Dorsolateral prefrontal cortex (tissue), 120 donors: ENCODE measurements at regions of chr20 and their contacts with region 1.

Region 1: DNA sequence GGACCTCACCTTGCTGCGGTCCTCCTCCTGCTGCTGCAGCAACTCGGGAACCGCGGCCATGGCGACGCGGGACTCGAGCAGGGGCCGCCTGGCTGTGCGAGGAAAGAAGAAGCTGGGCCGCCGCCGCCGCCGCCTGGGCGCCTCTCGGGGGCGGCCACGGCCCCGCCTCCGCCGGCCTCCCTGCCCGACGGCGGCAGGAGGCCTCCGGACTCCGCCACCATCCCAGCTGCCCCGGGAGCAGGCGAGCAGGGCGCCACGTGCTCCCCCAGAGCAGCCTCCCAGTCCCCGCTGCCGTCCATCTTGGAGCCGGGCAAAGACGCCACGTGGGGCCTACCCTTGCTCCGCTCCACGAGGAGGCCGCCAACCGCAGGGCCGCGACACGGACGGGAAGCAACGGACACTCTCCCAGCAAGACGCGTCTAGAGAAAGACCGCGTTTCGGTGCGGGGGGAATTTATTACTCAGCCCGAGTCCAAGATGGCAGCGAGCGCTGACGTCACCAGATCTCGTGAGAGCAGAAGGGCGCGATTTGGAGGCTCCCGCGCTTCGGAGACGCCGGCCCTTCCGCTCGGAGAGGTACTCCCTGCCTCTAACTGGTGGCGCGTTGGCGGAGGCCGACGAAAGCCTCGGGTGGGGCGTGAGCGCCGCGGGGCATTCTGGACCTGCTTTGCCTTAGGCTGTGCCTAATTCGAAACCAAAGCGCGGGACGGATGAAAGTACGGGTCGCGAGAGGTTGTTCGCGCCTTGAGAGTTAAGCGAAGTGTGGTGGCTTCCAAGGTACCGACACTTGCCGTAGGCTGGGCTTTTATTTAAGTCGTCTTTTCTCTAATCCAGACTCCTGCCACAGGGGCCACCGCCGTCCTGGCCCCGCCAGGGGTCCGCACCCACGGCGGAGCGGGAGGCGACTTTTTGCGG is at the starts of genes MGME1 and SNX5:
- DNase-seq: peak; percentile 98 to 99 (median 99)
- H3K4me3 ChIP-seq: peak within 1 kb of the TSS; percentile 64 to 99 (median 93)
- H3K27ac ChIP-seq: peak within 1 kb of the TSS; percentile 88 to 100 (median 99)
- H3K27me3 ChIP-seq: no peaks in the 10 kb centered on the region
- CTCF ChIP-seq: peak in 30 of 56 donors; percentile 5 to 53 (median 21)
- total RNA-seq, gene MGME1: 3.2 to 12.5 (median 6.9) TPM
- total RNA-seq, gene SNX5: 48.0 to 94.6 (median 62.3) TPM

Region 2: GRCh38 chr20:17530716-17531664 is 437.6 kb before region 1 on chr20 and contains the start of gene BFSP1:
- intact Hi-C with region 1: loop called in 1 of 2 experiments (anchors 2 kb)
- DNase-seq: peak in 8 of 10 donors; percentile 26 to 73 (median 52)
- H3K4me3 ChIP-seq: peak within 1 kb of the TSS; percentile 34 to 76 (median 63)
- H3K27ac ChIP-seq: peak within 1 kb of the TSS in 46 of 59 donors; percentile 1 to 86 (median 68)
- H3K27me3 ChIP-seq: no peaks in the 10 kb centered on the region
- CTCF ChIP-seq: peak in 11 of 56 donors; percentile 5 to 38 (median 9)
- total RNA-seq, gene BFSP1: 0.67 to 6.9 (median 3.2) TPM

Region 3: DNA sequence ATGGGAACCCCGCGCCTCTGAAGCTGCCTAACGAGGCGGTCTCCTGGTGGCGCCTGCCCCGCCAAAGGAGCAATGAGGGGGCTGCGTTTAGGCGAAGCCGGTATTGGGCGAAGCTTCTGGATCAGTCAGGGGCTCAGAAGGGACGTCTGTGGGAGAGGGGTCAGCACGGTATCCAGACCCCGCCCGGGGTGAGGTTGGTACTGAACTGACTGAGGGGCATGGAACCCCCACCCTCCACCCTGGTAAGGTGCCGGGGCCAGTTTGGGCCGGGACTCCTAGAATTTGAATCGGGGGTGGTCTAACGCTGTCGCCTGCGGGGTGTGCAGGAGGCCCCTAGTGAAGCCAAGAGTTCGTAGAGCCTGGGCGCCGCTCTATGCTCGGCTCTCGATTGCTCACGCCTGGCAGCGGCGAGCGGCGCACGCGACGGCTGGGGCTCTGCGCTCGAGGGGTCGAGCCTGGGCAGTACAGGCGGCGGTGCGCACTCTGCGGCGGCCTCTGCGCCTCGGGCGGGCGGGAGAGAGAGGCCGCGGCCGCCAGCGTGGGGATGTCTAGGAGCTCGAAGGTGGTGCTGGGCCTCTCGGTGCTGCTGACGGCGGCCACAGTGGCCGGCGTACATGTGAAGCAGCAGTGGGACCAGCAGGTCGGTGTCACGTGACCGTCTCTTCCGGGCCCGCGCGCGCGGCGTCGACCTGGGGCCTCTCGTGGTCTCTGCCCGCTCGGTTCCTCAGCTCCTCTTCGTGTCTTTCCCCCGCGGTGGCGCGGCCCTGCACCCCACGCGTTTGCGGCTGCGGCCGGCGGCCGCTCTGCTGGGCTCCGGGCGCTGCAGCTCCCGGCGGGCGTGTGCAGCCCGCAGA is 169.0 kb after region 1 on chr20 and contains the starts of genes KAT14 and PET117:
- intact Hi-C with region 1: loop called (anchors 2 kb)
- DNase-seq: peak; percentile 77 to 95 (median 83)
- H3K4me3 ChIP-seq: peak within 1 kb of the TSS; percentile 73 to 100 (median 96)
- H3K27ac ChIP-seq: peak within 1 kb of the TSS; percentile 57 to 98 (median 93)
- H3K27me3 ChIP-seq: no peaks in the 10 kb centered on the region
- CTCF ChIP-seq: peak in 36 of 56 donors; percentile 4 to 61 (median 30)
- total RNA-seq, gene KAT14: 15.4 to 35.2 (median 26.2) TPM
- total RNA-seq, gene PET117: 9.7 to 30.3 (median 19.4) TPM

Region 4: GRCh38 chr20:18287915-18288748 is 319.5 kb after region 1 on chr20 and contains the start of gene ZNF133:
- intact Hi-C with region 1: loop called (anchors 1 to 2 kb)
- DNase-seq: peak; percentile 94 to 98 (median 96)
- H3K4me3 ChIP-seq: peak within 1 kb of the TSS; percentile 65 to 99 (median 90)
- H3K27ac ChIP-seq: peak within 1 kb of the TSS; percentile 88 to 100 (median 98)
- H3K27me3 ChIP-seq: peaks cover 0 to 5% (median 0%) of the 10 kb centered on the region in 45 donors
- CTCF ChIP-seq: peak in 44 of 56 donors; percentile 2 to 62 (median 38)
- total RNA-seq, gene ZNF133: 14.6 to 30.7 (median 23.0) TPM

Region 5: DNA sequence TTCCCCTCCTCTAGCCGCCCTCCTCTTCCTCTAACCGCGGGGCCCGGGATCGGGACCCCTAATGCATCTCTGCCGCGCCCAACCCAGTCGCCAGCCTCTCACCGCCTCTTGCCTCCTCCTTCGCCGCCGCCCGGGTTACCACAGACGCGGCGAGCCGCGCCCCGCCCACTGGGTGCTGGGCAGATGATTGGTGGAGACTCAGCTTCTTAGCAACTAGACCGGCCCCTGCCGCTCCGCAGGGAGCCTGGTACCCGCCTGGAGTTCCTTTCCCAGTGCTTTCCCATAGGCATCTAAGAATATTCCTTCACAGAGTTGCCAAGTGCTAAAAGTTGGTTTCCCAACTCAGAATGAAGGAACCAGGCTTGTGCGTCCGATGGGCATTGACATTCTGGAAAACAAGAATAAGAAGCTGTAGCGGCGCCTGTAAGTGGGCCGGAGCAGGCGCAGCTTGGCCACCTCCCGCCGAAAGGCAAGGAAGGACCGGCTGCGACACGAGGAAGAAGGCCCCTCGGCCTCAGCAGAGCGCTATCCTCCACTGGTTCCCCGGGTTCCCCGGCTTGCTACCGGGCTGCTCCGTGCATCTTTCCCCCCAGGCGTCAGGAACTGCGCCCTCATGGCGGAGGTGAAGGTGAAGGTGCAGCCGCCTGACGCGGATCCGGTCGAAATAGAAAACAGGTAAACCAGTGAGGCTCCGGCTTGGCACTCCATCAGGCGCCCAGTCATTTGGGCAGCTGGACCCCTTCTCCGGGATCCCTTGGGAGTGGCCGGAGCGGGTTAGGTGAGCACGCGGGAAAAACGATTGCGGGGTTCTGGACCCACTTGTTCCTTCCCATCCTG is 498.5 kb after region 1 on chr20 and contains the starts of genes DZANK1 and POLR3F:
- intact Hi-C with region 1: loop called in 1 of 2 experiments (anchors 5 kb)
- DNase-seq: peak; percentile 96 to 99 (median 98)
- H3K4me3 ChIP-seq: peak within 1 kb of the TSS; percentile 72 to 100 (median 95)
- H3K27ac ChIP-seq: peak within 1 kb of the TSS; percentile 76 to 98 (median 93)
- H3K27me3 ChIP-seq: no peaks in the 10 kb centered on the region
- CTCF ChIP-seq: peak in 21 of 56 donors; percentile 3 to 49 (median 16)
- total RNA-seq, gene DZANK1: 5.0 to 14.4 (median 9.3) TPM
- total RNA-seq, gene POLR3F: 6.7 to 24.6 (median 16.5) TPM